Esophagus muscularis mucosa (tissue), 4 donors: ENCODE measurements at regions of chr15 and their contacts with region 1.

Region 1: GRCh38 chr15:84996055-84996454 is 14.4 kb downstream of the PDE8A start:
- DNase-seq: no peak
- H3K4me3 ChIP-seq: no peak overlapping the region
- H3K27ac ChIP-seq: no peak overlapping the region
- H3K4me1 ChIP-seq: peaks cover 21 to 31% (median 30%) of the 10 kb centered on the region in 4 donors
- H3K27me3 ChIP-seq: no peaks in the 10 kb centered on the region
- CTCF ChIP-seq: no peak
- EP300 ChIP-seq: no peak
- POLR2A ChIP-seq: no peak

Region 2: GRCh38 chr15:85014932-85015331 is 18.9 kb after region 1 on chr15:
- intact Hi-C with region 1: loop called (anchors 2 kb)
- DNase-seq: no peak
- H3K4me3 ChIP-seq: no peak overlapping the region
- H3K27ac ChIP-seq: no peak overlapping the region
- H3K4me1 ChIP-seq: peaks cover 23 to 38% (median 33%) of the 10 kb centered on the region in 4 donors
- H3K27me3 ChIP-seq: no peaks in the 10 kb centered on the region
- CTCF ChIP-seq: no peak
- EP300 ChIP-seq: no peak
- POLR2A ChIP-seq: no peak